HEK293 (cell line): ENCODE measurements at regions of chr11 and their contacts with region 1.

Region 1: GRCh38 chr11:88016392-88017170 is 158.7 kb downstream of the RAB38 start:
- H3K4me3 ChIP-seq: no peak overlapping the region
- H3K27ac ChIP-seq: no peak overlapping the region
- H3K4me1 ChIP-seq: no peaks in the 10 kb centered on the region
- CTCF ChIP-seq: no peak

Region 2: GRCh38 chr11:88281317-88281712 is 264.7 kb after region 1 on chr11:
- CTCF ChIA-PET with region 1: interaction called, 11 read pairs
- POLR2A ChIA-PET with region 1: no interaction called
- H3K4me3 ChIP-seq: no peak overlapping the region
- H3K27ac ChIP-seq: no peak overlapping the region
- H3K4me1 ChIP-seq: peaks cover 8% of the 10 kb centered on the region
- CTCF ChIP-seq: peak; percentile 9; the same call in 1 of the 2 replicates

Region 3: GRCh38 chr11:88398368-88398767 is 381.8 kb after region 1 on chr11:
- CTCF ChIA-PET with region 1: no interaction called
- POLR2A ChIA-PET with region 1: no interaction called
- H3K4me3 ChIP-seq: no peak overlapping the region
- H3K27ac ChIP-seq: no peak overlapping the region
- H3K4me1 ChIP-seq: peaks cover 2% of the 10 kb centered on the region; the same call in 1 of the 2 replicates
- CTCF ChIP-seq: no peak

Region 4: DNA sequence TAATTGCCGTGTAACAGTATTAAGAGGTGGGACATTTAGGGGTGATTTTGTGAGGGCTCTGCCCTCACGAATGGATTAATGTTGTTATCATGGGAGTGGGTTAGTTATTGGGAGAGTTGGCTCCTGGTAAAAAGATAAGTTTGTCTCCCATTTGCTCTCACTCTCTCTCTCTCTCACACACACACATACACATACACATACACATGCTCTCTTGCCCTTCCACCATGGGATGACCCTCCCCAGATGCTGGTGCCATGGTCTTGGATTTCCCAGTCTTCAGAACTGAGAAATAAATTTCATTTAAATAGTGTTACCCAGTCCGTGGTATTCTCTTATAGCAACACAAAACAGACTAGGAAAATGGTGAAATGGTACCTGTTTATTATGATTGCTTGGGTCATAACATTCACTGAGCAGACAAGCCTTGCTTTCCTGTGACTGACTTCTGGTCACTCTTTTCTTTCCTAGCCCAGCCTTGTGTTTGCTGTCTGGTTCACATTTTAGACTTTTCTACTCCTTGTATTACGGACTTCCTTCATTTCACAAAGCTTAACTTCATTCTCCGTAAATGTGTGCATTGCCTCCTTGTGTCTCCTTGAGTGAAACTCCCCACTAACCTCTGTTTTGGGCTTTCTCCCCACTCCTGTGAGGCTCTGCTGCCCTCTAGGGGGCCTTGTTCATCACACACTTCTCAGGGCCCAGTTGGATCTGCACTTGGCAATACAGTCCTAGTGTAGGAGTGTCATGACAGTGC is 527.5 kb after region 1 on chr11:
- CTCF ChIA-PET with region 1: interaction called, 66 read pairs
- POLR2A ChIA-PET with region 1: interaction called, 3 read pairs
- H3K4me3 ChIP-seq: no peak overlapping the region
- H3K27ac ChIP-seq: no peak overlapping the region
- H3K4me1 ChIP-seq: no peaks in the 10 kb centered on the region
- CTCF ChIP-seq: peak; percentile 90

Region 5: DNA sequence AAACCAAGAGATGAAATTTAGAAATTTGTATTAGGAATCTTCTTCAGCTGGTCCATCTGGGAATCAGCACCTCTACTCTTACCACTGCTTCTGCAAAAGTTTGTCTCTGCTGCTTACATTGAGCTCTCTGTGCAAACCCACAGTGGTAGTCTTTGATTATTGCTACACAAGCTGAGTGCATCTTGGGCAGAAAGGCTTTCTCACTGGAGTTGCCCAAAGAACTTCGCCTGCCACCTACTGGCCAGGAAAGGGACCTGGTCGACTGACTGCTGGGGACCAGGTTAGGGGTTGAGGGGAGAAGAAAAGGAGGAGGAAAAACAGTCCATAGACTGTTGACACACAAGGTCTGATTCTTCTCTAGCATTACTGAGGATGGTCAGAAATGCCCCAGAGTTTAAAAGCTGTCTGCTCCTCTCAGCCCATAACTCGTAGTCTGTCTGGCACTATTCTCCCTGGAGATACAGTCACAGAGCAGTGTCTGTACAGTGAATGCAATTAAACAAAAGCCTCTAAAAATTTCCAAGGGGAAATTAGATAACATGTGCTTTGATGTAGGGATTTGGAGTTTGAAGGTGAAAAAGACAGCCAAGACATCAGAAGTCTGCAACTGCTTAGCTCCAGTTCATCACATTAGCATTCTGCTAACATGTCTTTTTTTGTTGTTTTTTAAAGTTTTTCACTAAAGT is 535.9 kb after region 1 on chr11:
- CTCF ChIA-PET with region 1: interaction called, 46 read pairs
- POLR2A ChIA-PET with region 1: no interaction called
- H3K4me3 ChIP-seq: no peak overlapping the region
- H3K27ac ChIP-seq: no peak overlapping the region
- H3K4me1 ChIP-seq: peaks cover 2% of the 10 kb centered on the region; the same call in 1 of the 2 replicates
- CTCF ChIP-seq: peak; percentile 19; the same call in 1 of the 2 replicates

Region 6: DNA sequence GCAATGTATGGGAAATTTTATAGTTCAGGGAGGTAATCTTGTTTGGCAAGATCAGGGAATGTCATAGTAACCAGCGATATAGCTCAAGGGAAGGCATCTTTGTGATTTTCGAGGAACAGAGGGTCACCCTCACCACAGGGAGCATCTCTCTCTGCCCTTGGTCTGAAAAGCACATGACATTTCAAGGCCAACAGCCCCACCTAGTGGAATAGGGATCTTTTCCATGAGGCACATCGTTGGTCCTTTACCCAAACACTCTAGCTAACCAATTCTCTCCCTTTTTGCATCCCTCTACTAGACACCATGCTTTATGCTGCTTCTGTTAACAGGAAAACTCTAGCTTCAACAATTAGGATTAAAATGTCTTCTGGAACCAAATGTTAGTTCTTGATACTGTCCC is 870.2 kb after region 1 on chr11:
- CTCF ChIA-PET with region 1: interaction called, 10 read pairs
- POLR2A ChIA-PET with region 1: no interaction called
- H3K4me3 ChIP-seq: no peak overlapping the region
- H3K27ac ChIP-seq: no peak overlapping the region
- H3K4me1 ChIP-seq: no peaks in the 10 kb centered on the region
- CTCF ChIP-seq: no peak